SK-N-SH (cell line): ENCODE measurements at regions of chr2 and their contacts with region 1.

Region 1: GRCh38 chr2:23636426-23636825 is 251.4 kb downstream of the KLHL29 start:
- DNase-seq: peak; percentile 74
- H3K4me3 ChIP-seq: no peak overlapping the region
- H3K27ac ChIP-seq: peak overlapping the region; percentile 86 to 100
- H3K4me1 ChIP-seq: peaks cover 16 to 49% of the 10 kb centered on the region in 2 experiments
- H3K27me3 ChIP-seq: no peaks in the 10 kb centered on the region
- CTCF ChIP-seq: peak; percentile 45
- EP300 ChIP-seq: no peak
- RAD21 ChIP-seq: peak; percentile 63

Region 2: DNA sequence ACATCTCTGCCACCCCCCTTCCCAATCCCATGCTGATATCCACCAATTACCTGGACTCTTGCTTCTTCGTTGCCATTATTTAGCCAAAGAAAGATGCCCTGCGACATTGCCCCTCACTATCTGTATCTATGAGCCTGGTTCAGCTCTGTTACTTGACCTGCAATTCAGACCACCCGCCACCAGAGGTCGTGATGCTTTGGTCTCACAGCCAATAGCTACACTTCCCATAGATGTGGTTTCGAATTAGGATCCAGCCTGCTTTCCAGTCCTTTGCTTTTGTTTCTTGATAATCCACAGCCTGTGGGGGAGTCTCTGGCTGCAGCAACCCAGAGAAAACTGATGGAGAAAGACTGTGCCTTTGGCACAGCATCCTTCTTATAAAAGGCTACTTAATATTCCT is 12.0 kb before region 1 on chr2:
- CTCF ChIA-PET with region 1: interaction called, 40 read pairs
- POLR2A ChIA-PET with region 1: interaction called, 4 read pairs
- DNase-seq: no peak
- H3K4me3 ChIP-seq: no peak overlapping the region
- H3K27ac ChIP-seq: no peak overlapping the region
- H3K4me1 ChIP-seq: peaks cover 6 to 53% of the 10 kb centered on the region in 2 experiments; a peak in 3 of 4 replicates
- H3K27me3 ChIP-seq: no peaks in the 10 kb centered on the region
- CTCF ChIP-seq: peak; percentile 59
- EP300 ChIP-seq: no peak
- RAD21 ChIP-seq: peak; percentile 22; the same call in 1 of the 2 replicates

Region 3: GRCh38 chr2:23760736-23761135 is 124.3 kb after region 1 on chr2:
- CTCF ChIA-PET with region 1: interaction called, 10 read pairs
- POLR2A ChIA-PET with region 1: no interaction called
- DNase-seq: peak; percentile 21
- H3K4me3 ChIP-seq: no peak overlapping the region
- H3K27ac ChIP-seq: no peak overlapping the region
- H3K4me1 ChIP-seq: peaks cover 0 to 21% of the 10 kb centered on the region in 2 experiments; a peak in 1 of 4 replicates
- H3K27me3 ChIP-seq: no peaks in the 10 kb centered on the region
- CTCF ChIP-seq: peak; percentile 75
- EP300 ChIP-seq: no peak
- RAD21 ChIP-seq: peak; percentile 75